ENCODE measurements at regions of chr16 and their contacts with region 1.

Region 1: DNA sequence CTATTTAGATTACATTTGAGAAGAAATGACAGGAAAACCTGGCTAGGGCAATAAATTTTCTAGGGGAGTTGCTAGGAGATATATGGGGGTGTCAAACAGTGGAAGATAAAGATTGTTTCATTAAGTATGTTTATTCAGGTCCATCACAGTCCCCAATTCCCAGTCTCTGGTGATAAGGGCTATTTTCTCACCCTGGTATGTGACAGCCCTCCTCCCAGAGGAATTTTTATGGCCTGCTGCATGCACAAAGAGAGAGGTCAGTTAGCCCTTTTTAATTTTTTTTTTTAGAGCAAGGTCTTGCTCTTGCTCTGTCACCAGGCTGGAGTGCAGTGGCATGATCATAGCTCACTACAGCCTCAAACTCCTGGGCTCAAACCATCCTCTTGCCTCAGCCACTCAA is 53.6 kb upstream of the ATF7IP2 start:
- DNase-seq: no peak
- H3K4me3 Mint-ChIP-seq: no peak overlapping the region
- H3K27ac Mint-ChIP-seq: no peak overlapping the region
- H3K4me1 Mint-ChIP-seq: peaks cover 37% of the 10 kb centered on the region
- H3K27me3 Mint-ChIP-seq: no peaks in the 10 kb centered on the region

Region 2: DNA sequence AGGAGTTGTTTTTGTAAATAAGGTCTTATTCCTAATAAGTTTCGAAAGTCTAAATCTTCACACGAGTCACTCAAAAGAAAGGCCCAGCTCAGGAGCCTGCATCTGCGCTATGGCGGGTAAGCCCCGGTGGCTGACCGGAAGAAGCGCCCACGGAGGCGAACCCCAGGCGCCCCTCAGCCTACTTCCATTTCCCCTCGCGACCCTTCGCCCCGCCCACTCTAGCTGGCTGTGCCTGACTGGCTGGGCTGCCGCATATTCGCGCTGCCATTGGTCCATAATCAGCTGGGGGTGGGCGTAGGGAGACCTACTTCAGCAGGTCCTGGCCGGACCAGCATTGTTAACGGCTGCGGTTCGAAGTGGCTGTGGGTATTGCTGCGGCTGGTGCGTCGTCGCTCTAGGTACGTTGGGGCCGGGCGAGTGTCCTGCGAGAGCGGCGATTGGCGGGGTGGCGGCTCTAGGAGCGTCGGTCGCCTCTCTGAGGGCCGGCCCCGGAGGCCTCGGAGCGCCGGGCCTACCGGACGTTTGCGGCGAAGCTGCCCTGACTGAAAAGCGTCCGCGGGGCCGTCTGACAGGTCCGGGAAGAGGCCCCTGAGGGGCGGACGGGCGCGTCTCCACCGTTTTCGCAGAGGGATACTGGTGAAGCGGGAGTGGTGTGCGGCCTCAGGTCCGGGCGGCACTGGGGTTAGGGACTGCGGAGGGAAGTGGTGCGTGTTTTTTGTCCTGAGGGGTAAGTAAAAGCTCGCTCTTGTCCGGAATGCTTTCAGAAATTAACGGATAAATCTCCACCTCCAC is 53.7 kb after region 1 on chr16 and contains the start of gene ATF7IP2:
- CTCF ChIA-PET with region 1: no interaction called
- POLR2A ChIA-PET with region 1: no interaction called
- intact Hi-C with region 1: loop called (anchors 2 kb)
- DNase-seq: peak; percentile 94
- H3K4me3 Mint-ChIP-seq: peak within 1 kb of the TSS; percentile 97
- H3K27ac Mint-ChIP-seq: peak within 1 kb of the TSS; percentile 93
- H3K4me1 Mint-ChIP-seq: peaks cover 41% of the 10 kb centered on the region
- H3K27me3 Mint-ChIP-seq: no peaks in the 10 kb centered on the region
- total RNA-seq, gene ATF7IP2: 14.7 to 15.1 TPM

Measured in activated CD4-positive, alpha-beta memory T cell treated with anti-CD3 and anti-CD28 coated beads for 36 hours (primary cell).